K562 (cell line): ENCODE measurements at regions of chr7 and their contacts with region 1.

Region 1: GRCh38 chr7:65287023-65287422 is 86.6 kb upstream of the ZNF92 start:
- DNase-seq: no peak
- ATAC-seq: no peak
- H3K4me3 ChIP-seq: no peak overlapping the region
- H3K27ac ChIP-seq: no peak overlapping the region
- H3K4me1 ChIP-seq: no peaks in the 10 kb centered on the region
- H3K27me3 ChIP-seq: no peaks in the 10 kb centered on the region
- CTCF ChIP-seq: no peak
- EP300 ChIP-seq: no peak
- POLR2A ChIP-seq: no peak
- RAD21 ChIP-seq: no peak

Region 2: GRCh38 chr7:65269150-65269856 is 17.7 kb before region 1 on chr7:
- CTCF ChIA-PET with region 1: no interaction called
- POLR2A ChIA-PET with region 1: interaction called, 3 read pairs
- in situ Hi-C with region 1: no loop called
- intact Hi-C with region 1: loop called (anchors 2 kb)
- DNase-seq: peak; percentile 96 to 97 (median 96)
- ATAC-seq: peak; percentile 98
- H3K4me3 ChIP-seq: peak overlapping the region; percentile 60
- H3K27ac ChIP-seq: peak overlapping the region; percentile 67
- H3K4me1 ChIP-seq: peaks cover 5 to 13% of the 10 kb centered on the region in 2 experiments; a peak in 4 of 5 replicates
- H3K27me3 ChIP-seq: peaks cover 0 to 26% of the 10 kb centered on the region in 2 experiments; a peak in 1 of 5 replicates
- CTCF ChIP-seq: no peak
- EP300 ChIP-seq: no peak
- POLR2A ChIP-seq: peak; percentile 83
- RAD21 ChIP-seq: no peak